ENCODE measurements at regions of chr2 and their contacts with region 1.

Region 1: GRCh38 chr2:206296128-206296527 is 21.7 kb downstream of the ZDBF2 start:
- DNase-seq: no peak
- H3K4me3 ChIP-seq: no peak overlapping the region
- H3K27ac ChIP-seq: no peak overlapping the region
- H3K4me1 ChIP-seq: no peaks in the 10 kb centered on the region
- H3K27me3 ChIP-seq: no peaks in the 10 kb centered on the region
- CTCF ChIP-seq: no peak
- EP300 ChIP-seq: no peak
- POLR2A ChIP-seq: no peak

Region 2: DNA sequence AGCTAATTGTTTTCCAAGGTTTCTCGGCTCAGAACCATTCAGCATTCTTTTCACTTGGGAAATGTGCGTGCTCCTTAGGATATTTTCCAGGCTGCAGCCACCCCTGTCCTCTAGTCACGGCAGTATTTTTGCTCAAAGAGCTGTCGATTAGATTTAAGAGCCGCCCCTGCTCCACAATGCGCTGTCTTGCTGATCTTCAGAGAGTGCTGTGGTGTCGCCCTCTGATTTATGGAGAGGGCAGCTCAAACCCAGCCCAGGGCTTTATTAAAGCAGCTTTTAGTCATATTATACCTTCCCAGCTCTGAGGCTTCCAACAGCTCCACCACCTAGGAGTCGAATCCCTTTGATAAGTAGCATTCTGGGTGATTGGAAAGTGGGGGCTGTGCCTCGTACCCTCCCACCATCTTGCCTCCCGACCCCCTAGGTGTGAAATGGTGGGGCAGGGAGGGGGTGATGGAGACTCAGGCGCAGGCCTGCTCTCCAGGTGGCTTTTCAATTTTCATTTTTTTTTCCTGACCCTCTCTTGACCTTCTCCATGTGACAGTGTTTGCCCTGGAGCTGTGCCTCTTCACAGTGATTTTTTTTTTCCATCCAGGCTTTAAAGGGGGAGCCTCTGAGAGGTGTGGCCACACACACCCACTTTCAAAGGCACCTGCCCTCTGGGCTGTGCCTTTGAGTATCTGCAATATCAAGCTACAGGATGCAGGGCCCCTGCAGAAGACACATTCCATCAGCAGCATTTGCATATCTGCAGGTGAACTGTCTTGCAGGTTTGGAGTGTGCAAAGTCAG is 666.9 kb before region 1 on chr2:
- intact Hi-C with region 1: loop called in 1 of 4 experiments (anchors 5 kb)
- DNase-seq: no peak
- H3K4me3 ChIP-seq: no peak overlapping the region
- H3K27ac ChIP-seq: no peak overlapping the region
- H3K4me1 ChIP-seq: peaks cover 1% of the 10 kb centered on the region
- H3K27me3 ChIP-seq: no peaks in the 10 kb centered on the region
- CTCF ChIP-seq: no peak
- EP300 ChIP-seq: no peak
- POLR2A ChIP-seq: no peak